SK-N-SH (cell line): ENCODE measurements at regions of chr2 and their contacts with region 1.

Region 1: DNA sequence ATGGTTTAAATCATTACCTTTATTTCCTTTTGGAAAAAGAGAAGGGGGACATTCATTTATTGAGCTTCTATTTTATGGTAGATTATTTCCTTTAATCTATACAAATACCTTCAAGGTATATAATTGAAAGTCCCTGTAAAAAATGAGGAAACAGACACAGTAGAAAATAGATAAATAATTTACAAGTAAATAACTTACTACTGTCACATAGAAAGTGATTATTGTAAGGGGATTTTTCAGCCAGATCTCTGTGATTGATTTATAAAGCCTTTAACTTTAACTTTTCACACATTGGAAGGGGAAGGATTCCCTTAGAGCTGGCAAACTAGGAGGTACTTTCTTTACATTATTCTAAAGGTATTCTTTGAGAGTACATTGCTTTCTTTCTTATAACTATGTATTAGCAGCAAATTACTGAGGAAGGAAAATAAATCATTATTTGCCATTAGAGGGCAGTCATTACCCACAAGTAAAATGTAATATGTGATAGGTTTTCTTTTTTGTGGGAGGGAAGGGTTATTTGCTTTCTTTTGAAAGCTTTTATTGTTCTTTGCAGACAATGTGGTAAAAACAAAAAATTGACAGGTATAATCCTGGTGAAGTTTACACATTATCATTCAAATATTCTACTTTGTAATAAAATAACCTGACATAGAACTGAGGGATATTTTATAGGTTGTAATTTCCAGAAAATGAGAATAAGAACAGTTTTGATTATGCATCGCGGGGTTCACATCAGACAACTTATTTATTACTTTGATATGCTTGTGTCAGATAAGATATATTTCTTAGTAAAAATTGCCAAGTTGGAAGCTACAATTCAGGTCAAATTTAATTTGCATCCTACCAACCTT is 24.8 kb upstream of the RPE start:
- DNase-seq: peak; percentile 22
- H3K4me3 ChIP-seq: no peak overlapping the region
- H3K27ac ChIP-seq: no peak overlapping the region
- H3K4me1 ChIP-seq: no peaks in the 10 kb centered on the region
- H3K27me3 ChIP-seq: no peaks in the 10 kb centered on the region
- CTCF ChIP-seq: peak; percentile 75
- EP300 ChIP-seq: no peak
- RAD21 ChIP-seq: peak; percentile 77

Region 2: DNA sequence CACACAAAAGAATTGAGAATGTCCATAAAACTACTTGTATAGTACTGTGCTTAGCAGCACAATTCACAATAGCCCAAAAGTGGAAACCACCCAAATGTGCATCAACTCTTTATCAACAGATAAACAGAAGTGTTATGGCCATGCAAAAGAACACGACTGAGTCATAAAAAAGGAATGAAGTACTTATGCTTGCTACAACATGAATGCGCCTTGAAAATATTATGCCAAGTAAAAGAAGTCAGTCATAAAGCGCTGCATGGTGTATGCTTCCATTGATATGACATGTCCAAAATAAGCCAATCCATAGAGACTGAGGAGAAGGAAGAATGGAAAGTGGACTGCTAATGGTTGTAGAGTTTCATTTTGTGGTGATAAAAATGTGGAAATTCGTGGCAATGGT is 565.9 kb before region 1 on chr2:
- CTCF ChIA-PET with region 1: no interaction called
- POLR2A ChIA-PET with region 1: no interaction called
- DNase-seq: no peak
- H3K4me3 ChIP-seq: no peak overlapping the region
- H3K27ac ChIP-seq: no peak overlapping the region
- H3K4me1 ChIP-seq: no peaks in the 10 kb centered on the region
- H3K27me3 ChIP-seq: no peaks in the 10 kb centered on the region
- CTCF ChIP-seq: no peak
- EP300 ChIP-seq: no peak
- RAD21 ChIP-seq: no peak

Region 3: DNA sequence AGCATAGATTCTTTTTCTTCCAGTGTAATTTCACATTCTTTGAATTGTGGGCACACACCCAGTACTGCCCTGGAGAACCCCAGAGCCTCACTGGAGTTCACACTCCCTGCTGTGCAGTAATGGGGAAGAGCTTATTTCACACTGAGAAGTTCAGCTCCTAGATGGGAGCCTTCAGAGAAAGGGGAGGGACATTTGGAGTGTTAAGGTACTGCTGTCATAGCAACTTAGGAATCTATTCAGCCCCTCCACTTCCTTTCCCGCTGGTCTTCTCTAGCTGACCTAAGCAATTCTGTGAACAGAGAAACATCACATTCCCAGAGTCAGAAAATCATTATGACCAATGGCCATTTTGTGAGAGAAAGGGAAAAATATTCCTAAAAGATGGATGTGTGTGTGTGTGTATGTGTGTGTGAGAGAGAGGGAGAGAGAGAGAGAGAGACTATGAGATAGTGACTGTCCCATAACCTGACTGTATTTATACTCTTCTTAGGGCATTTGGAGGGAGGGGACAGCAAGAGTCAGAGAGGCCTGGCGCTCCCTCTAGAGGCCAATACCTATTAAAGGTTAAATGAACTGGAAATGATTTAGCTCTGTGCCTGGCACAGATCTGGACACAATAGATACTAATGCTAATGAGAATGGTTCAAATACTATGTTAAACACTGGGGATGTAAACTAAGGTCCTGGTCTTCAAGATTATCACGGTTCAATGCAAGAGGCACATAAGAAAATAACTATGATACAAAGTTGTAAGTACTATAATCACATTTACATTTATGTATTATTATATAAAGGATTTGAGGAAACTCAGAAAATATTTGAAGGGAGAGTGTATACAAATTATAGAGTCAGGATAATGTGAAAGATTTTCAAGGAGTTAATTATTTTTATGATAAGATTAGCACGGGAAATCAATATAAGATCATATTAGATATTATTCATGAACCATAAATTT is 16.7 kb before region 1 on chr2:
- CTCF ChIA-PET with region 1: interaction called, 18 read pairs
- POLR2A ChIA-PET with region 1: no interaction called
- DNase-seq: peak; percentile 48
- H3K4me3 ChIP-seq: no peak overlapping the region; a peak in 1 of 4 replicates
- H3K27ac ChIP-seq: no peak overlapping the region
- H3K4me1 ChIP-seq: no peaks in the 10 kb centered on the region; a peak in 1 of 4 replicates
- H3K27me3 ChIP-seq: no peaks in the 10 kb centered on the region
- CTCF ChIP-seq: peak; percentile 81
- EP300 ChIP-seq: no peak
- RAD21 ChIP-seq: peak; percentile 80

Region 4: GRCh38 chr2:209988010-209988409 is 10.4 kb after region 1 on chr2:
- CTCF ChIA-PET with region 1: interaction called, 10 read pairs
- POLR2A ChIA-PET with region 1: no interaction called
- DNase-seq: no peak
- H3K4me3 ChIP-seq: no peak overlapping the region
- H3K27ac ChIP-seq: no peak overlapping the region
- H3K4me1 ChIP-seq: no peaks in the 10 kb centered on the region
- H3K27me3 ChIP-seq: no peaks in the 10 kb centered on the region
- CTCF ChIP-seq: no peak
- EP300 ChIP-seq: no peak
- RAD21 ChIP-seq: no peak

Region 5: DNA sequence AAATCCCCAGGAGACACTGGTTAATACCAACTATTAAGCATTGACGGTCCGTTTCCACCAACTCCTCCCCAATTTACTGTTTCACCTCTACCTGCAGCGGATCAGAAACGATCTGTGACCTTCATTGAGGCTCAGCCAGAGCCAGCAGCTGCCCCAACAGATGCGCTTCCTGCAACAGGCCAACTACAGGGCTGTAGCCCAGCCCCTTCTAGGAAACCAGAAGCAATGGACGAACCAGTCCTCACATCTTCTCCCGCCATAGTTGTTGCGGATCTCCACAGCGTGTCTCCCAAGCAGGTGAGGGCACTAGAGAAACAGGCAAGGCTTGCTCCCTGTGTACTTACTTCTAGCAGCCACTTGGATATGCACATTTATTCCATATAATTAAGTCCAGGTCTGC is 16.4 kb after region 1 on chr2:
- CTCF ChIA-PET with region 1: interaction called, 10 read pairs
- POLR2A ChIA-PET with region 1: no interaction called
- DNase-seq: no peak
- H3K4me3 ChIP-seq: no peak overlapping the region
- H3K27ac ChIP-seq: no peak overlapping the region
- H3K4me1 ChIP-seq: no peaks in the 10 kb centered on the region
- H3K27me3 ChIP-seq: no peaks in the 10 kb centered on the region
- CTCF ChIP-seq: no peak
- EP300 ChIP-seq: no peak
- RAD21 ChIP-seq: no peak

Region 6: DNA sequence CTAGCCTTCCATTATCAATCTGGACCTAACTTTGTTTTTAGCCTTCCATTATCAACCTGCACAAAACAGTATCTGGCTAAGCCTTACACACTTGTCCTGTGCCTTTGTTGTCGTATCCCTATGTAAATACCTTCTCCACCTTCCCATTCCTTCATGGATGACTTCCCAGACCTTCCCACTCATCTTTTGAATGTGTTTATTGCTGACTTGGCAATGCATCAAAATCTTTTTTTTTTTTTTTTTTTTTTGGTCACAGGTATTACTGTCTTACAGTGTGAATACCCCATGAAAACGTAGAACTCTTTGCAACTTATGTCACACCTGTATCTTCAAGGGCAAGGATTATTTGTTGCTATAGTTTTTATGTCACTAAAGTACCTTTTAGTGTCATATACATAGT is 50.6 kb after region 1 on chr2:
- CTCF ChIA-PET with region 1: no interaction called
- POLR2A ChIA-PET with region 1: no interaction called
- DNase-seq: no peak
- H3K4me3 ChIP-seq: no peak overlapping the region
- H3K27ac ChIP-seq: no peak overlapping the region
- H3K4me1 ChIP-seq: no peaks in the 10 kb centered on the region
- H3K27me3 ChIP-seq: no peaks in the 10 kb centered on the region
- CTCF ChIP-seq: no peak
- EP300 ChIP-seq: no peak
- RAD21 ChIP-seq: no peak

Region 7: GRCh38 chr2:210195101-210195852 is 217.7 kb after region 1 on chr2:
- CTCF ChIA-PET with region 1: interaction called, 30 read pairs
- POLR2A ChIA-PET with region 1: no interaction called
- DNase-seq: peak; percentile 34
- H3K4me3 ChIP-seq: peak overlapping the region in 1 of 2 experiments; percentile 26; a peak in 1 of 4 replicates
- H3K27ac ChIP-seq: no peak overlapping the region
- H3K4me1 ChIP-seq: peaks cover 4 to 7% of the 10 kb centered on the region in 2 experiments; a peak in 3 of 4 replicates
- H3K27me3 ChIP-seq: no peaks in the 10 kb centered on the region
- CTCF ChIP-seq: peak; percentile 87
- EP300 ChIP-seq: no peak
- RAD21 ChIP-seq: peak; percentile 91

Region 8: GRCh38 chr2:210203157-210203947 is 225.7 kb after region 1 on chr2:
- CTCF ChIA-PET with region 1: interaction called, 15 read pairs
- POLR2A ChIA-PET with region 1: no interaction called
- DNase-seq: no peak
- H3K4me3 ChIP-seq: no peak overlapping the region
- H3K27ac ChIP-seq: no peak overlapping the region
- H3K4me1 ChIP-seq: peaks cover 0 to under 1% of the 10 kb centered on the region in 2 experiments; a peak in 2 of 4 replicates
- H3K27me3 ChIP-seq: no peaks in the 10 kb centered on the region
- CTCF ChIP-seq: no peak
- EP300 ChIP-seq: no peak
- RAD21 ChIP-seq: no peak